Sigmoid colon (tissue), 7 donors: ENCODE measurements at regions of chr18 and their contacts with region 1.

Region 1: GRCh38 chr18:58043491-58044379 is at the start of gene NEDD4L:
- DNase-seq: peak; percentile 92
- H3K4me3 ChIP-seq: peak within 1 kb of the TSS; percentile 50 to 83 (median 78)
- H3K27ac ChIP-seq: peak within 1 kb of the TSS; percentile 75 to 90 (median 87)
- H3K4me1 ChIP-seq: peaks cover 0 to 34% (median 22%) of the 10 kb centered on the region in 4 donors
- H3K27me3 ChIP-seq: no peaks in the 10 kb centered on the region
- CTCF ChIP-seq: peak; percentile 70 to 91 (median 80)
- EP300 ChIP-seq: no peak
- POLR2A ChIP-seq: no peak
- total RNA-seq, gene NEDD4L: 52.0 to 62.9 (median 55.9) TPM

Region 2: GRCh38 chr18:57630002-57630753 is 413.6 kb before region 1 on chr18:
- intact Hi-C with region 1: loop called (anchors 5 kb)
- DNase-seq: peak; percentile 99
- H3K4me3 ChIP-seq: peak overlapping the region; percentile 34 to 69 (median 58)
- H3K27ac ChIP-seq: peak overlapping the region; percentile 74 to 82 (median 81)
- H3K4me1 ChIP-seq: peaks cover 0 to 11% (median 8%) of the 10 kb centered on the region in 4 donors
- H3K27me3 ChIP-seq: no peaks in the 10 kb centered on the region
- CTCF ChIP-seq: peak; percentile 63 to 70 (median 66)
- EP300 ChIP-seq: peak in 1 of 4 donors; percentile 66
- POLR2A ChIP-seq: no peak

Region 3: GRCh38 chr18:58117786-58118403 is 74.2 kb after region 1 on chr18:
- intact Hi-C with region 1: loop called (anchors 1 kb)
- DNase-seq: no peak
- H3K4me3 ChIP-seq: no peak overlapping the region
- H3K27ac ChIP-seq: peak overlapping the region in 2 of 4 donors; percentile 22 to 47
- H3K4me1 ChIP-seq: peaks cover 0 to 15% (median 8%) of the 10 kb centered on the region in 4 donors
- H3K27me3 ChIP-seq: no peaks in the 10 kb centered on the region
- CTCF ChIP-seq: no peak
- EP300 ChIP-seq: peak in 1 of 4 donors; percentile 48
- POLR2A ChIP-seq: no peak

Region 4: DNA sequence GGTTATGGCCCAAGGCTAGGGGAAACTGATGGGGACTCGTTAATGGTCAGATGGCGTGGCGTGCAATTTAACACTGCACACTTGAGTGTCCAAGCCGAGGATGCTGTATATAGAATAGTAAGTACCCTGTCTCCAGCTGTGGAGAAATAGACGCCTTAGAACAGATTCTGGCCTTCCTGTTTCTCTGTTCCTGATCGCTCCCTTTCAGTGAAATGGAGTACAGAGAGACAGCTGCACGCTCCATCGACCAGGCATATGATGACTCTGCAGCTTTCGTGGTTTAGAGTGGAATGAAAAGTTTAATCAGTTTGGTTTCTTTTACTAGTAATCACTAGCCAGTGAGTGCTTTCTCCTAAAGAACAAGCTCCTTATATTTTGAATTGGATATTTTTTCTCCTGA is 213.7 kb after region 1 on chr18:
- intact Hi-C with region 1: loop called (anchors 10 kb)
- DNase-seq: no peak
- H3K4me3 ChIP-seq: no peak overlapping the region
- H3K27ac ChIP-seq: peak overlapping the region in 3 of 4 donors; percentile 43 to 81 (median 77)
- H3K4me1 ChIP-seq: peaks cover 0 to 50% (median 27%) of the 10 kb centered on the region in 4 donors
- H3K27me3 ChIP-seq: no peaks in the 10 kb centered on the region
- CTCF ChIP-seq: no peak
- EP300 ChIP-seq: no peak
- POLR2A ChIP-seq: no peak

Region 5: DNA sequence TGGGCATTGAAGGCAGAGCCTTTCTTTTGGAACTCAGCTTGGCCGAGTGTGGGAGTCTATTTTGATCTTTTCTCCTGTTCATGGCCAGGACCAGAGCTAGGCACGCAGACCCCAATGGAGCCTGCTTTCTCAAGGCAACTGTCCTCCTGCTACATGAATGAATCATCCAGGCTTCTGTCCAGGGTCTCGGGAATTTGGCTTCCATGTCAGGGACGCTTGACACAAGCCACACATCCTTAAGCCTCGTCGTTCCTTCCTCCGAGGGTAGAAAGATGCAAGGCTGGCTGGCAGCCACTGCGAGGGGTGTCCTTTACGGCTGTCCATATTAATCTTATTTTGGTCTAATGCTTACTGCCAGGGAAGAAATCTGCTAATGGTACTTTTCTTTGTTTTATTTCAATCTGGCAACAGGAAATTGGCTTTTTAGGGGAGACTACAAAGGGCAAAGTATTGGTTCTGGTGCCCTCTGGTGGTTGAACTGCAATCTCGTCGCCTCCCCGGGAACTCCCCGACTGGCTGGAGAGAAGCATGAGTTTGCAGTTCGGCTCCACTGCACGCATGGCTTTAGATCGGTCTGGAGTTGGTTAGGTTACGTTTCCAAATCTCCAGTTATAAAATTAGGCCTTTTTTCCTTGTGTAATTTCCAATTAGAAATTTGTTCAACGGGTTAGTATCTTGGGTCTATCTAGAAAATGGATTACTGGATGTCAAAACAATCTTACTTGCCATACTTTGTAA is 449.9 kb after region 1 on chr18:
- intact Hi-C with region 1: loop called (anchors 2 kb)
- DNase-seq: peak; percentile 89
- H3K4me3 ChIP-seq: peak overlapping the region in 3 of 4 donors; percentile 13 to 29 (median 25)
- H3K27ac ChIP-seq: peak overlapping the region; percentile 31 to 74 (median 70)
- H3K4me1 ChIP-seq: peaks cover 0 to 29% (median 20%) of the 10 kb centered on the region in 4 donors
- H3K27me3 ChIP-seq: no peaks in the 10 kb centered on the region
- CTCF ChIP-seq: peak; percentile 71 to 83 (median 78)
- EP300 ChIP-seq: no peak
- POLR2A ChIP-seq: no peak